CD4-positive, alpha-beta T cell (primary cell): ENCODE measurements at regions of chr9 and their contacts with region 1.

Region 1: GRCh38 chr9:98074115-98074990 is 17.8 kb downstream of the NANS start:
- DNase-seq: peak; percentile 48 to 82 (median 65)
- ATAC-seq: no peak
- H3K4me3 ChIP-seq: no peak overlapping the region
- H3K4me3 Mint-ChIP-seq: peak overlapping the region; percentile 69
- H3K27ac ChIP-seq: peak overlapping the region; percentile 73 to 83
- H3K27ac Mint-ChIP-seq: peak overlapping the region; percentile 94
- H3K4me1 ChIP-seq: peaks cover 28% of the 10 kb centered on the region
- H3K4me1 Mint-ChIP-seq: peaks cover 51% of the 10 kb centered on the region
- H3K27me3 ChIP-seq: no peaks in the 10 kb centered on the region
- H3K27me3 Mint-ChIP-seq: no peaks in the 10 kb centered on the region
- CTCF ChIP-seq: peak; percentile 99

Region 2: GRCh38 chr9:97954550-97954989 is 119.8 kb before region 1 on chr9:
- CTCF ChIA-PET with region 1: no interaction called
- POLR2A ChIA-PET with region 1: no interaction called
- intact Hi-C with region 1: no loop called
- DNase-seq: peak; percentile 38 to 84 (median 48)
- ATAC-seq: peak; percentile 93
- H3K4me3 ChIP-seq: no peak overlapping the region
- H3K4me3 Mint-ChIP-seq: no peak overlapping the region
- H3K27ac ChIP-seq: no peak overlapping the region
- H3K27ac Mint-ChIP-seq: no peak overlapping the region
- H3K4me1 ChIP-seq: peaks cover 7% of the 10 kb centered on the region
- H3K4me1 Mint-ChIP-seq: peaks cover 4% of the 10 kb centered on the region
- H3K27me3 ChIP-seq: no peaks in the 10 kb centered on the region
- H3K27me3 Mint-ChIP-seq: no peaks in the 10 kb centered on the region
- CTCF ChIP-seq: peak; percentile 81

Region 3: GRCh38 chr9:98101868-98102273 is 27.5 kb after region 1 on chr9:
- CTCF ChIA-PET with region 1: interaction called, 3 read pairs
- POLR2A ChIA-PET with region 1: interaction called, 13 read pairs
- intact Hi-C with region 1: loop called (anchors 1 to 2 kb)
- DNase-seq: peak; percentile 63 to 96 (median 80)
- ATAC-seq: peak; percentile 94
- H3K4me3 ChIP-seq: peak overlapping the region; percentile 34
- H3K4me3 Mint-ChIP-seq: peak overlapping the region; percentile 71
- H3K27ac ChIP-seq: peak overlapping the region; percentile 74 to 79
- H3K27ac Mint-ChIP-seq: peak overlapping the region; percentile 91
- H3K4me1 ChIP-seq: peaks cover 95% of the 10 kb centered on the region
- H3K4me1 Mint-ChIP-seq: peaks cover 84% of the 10 kb centered on the region
- H3K27me3 ChIP-seq: no peaks in the 10 kb centered on the region
- H3K27me3 Mint-ChIP-seq: no peaks in the 10 kb centered on the region
- CTCF ChIP-seq: no peak

Region 4: GRCh38 chr9:98142182-98142907 is 68.0 kb after region 1 on chr9:
- CTCF ChIA-PET with region 1: no interaction called
- POLR2A ChIA-PET with region 1: no interaction called
- intact Hi-C with region 1: no loop called
- DNase-seq: no peak
- ATAC-seq: no peak
- H3K4me3 ChIP-seq: no peak overlapping the region
- H3K4me3 Mint-ChIP-seq: no peak overlapping the region
- H3K27ac ChIP-seq: no peak overlapping the region
- H3K27ac Mint-ChIP-seq: no peak overlapping the region
- H3K4me1 ChIP-seq: peaks cover 7% of the 10 kb centered on the region
- H3K4me1 Mint-ChIP-seq: no peaks in the 10 kb centered on the region
- H3K27me3 ChIP-seq: no peaks in the 10 kb centered on the region
- H3K27me3 Mint-ChIP-seq: no peaks in the 10 kb centered on the region
- CTCF ChIP-seq: no peak

Region 5: DNA sequence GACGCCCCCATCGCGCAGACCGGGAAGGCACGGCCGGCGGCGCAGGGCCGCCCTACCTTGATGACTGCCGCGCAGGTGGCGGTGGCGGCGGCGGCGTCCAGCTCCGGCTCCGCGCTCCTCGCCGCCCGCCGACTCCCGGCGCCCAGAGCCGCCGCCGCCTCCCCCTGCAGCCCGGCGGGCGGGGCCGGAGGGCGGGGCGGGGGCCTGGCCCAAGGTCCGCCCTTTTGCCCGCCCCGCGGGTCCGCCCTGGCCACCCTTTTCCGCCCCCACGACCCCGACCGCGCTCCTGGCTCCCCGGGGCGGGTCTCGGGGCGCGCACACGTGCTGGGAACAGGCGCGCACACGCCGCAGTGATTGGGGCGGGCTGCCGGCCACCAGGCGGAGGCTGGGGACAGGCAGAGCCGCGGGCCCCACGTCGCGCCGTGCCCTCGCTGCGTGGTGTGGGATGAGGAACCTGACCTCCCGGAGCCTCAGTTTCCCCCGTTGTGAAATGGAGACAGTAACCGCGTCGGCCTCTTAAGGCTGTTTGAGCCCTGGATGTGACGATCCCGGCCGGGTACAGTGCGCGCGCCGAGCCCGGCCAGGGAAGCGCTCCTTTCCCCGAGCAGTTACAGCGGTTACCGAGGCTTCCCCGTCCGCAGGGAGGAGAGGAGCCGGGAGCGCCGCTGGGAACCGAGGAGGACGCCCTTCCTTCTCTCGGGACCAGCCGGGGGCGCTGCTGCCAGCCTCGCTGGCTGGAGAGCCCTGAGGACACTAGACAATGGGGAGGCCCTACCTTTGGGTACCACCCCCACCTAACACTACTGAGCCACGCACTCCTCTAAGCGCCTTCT is 118.4 kb after region 1 on chr9 and contains the start of gene CORO2A:
- CTCF ChIA-PET with region 1: interaction called, 3 read pairs
- POLR2A ChIA-PET with region 1: no interaction called
- intact Hi-C with region 1: loop called (anchors 5 kb)
- DNase-seq: peak; percentile 36 to 86 (median 66)
- ATAC-seq: peak; percentile 65
- H3K4me3 ChIP-seq: peak within 1 kb of the TSS; percentile 80
- H3K4me3 Mint-ChIP-seq: peak within 1 kb of the TSS; percentile 89
- H3K27ac ChIP-seq: peak within 1 kb of the TSS in 1 of 2 donors; percentile 30
- H3K27ac Mint-ChIP-seq: peak within 1 kb of the TSS; percentile 76
- H3K4me1 ChIP-seq: peaks cover 31% of the 10 kb centered on the region
- H3K4me1 Mint-ChIP-seq: peaks cover 44% of the 10 kb centered on the region
- H3K27me3 ChIP-seq: no peaks in the 10 kb centered on the region
- H3K27me3 Mint-ChIP-seq: no peaks in the 10 kb centered on the region
- CTCF ChIP-seq: peak; percentile 29
- total RNA-seq, gene CORO2A: 6.8 to 8.5 TPM

Region 6: DNA sequence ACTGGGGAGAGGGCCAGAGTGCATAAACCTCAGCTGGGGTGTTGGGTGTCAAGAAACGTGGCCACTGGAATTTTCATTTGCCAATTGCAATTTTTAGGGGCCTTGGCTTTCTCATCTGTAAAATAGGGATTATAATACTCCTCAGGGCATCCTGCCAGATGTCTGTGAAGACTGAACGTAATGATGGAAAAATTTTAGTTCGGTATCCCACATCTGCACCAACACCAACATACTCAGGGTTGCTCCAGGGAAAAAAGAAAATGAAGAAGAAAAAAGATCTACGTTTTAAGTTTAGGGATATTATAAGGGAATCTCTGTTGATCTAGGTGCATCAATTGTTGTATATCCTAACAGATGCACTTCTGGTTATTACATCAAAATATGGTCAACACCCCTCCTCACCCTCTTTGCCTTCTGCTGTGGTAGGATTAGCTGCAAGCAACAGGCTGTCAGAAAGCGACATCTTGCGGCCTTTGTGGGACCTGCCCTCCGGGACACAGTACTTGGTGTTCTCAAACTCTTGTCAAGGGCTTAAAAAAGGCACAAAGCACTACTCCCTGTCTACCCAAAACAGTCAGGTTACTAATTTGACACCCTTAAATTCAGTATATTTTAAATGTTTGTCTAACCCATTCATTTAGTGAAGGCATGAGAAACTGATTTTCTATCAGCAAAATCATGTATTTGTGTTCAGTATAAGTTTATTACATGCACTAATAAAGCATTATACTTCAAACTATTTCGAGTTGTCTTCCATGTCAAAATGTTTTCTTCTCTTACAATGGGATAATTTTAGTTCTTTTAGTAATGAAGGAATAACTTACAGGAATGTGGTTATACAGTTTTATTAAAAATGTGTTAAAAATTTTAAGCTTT is 189.4 kb after region 1 on chr9:
- CTCF ChIA-PET with region 1: interaction called, 10 read pairs
- POLR2A ChIA-PET with region 1: interaction called, 3 read pairs
- intact Hi-C with region 1: loop called (anchors 1 kb)
- DNase-seq: peak; percentile 73 to 90 (median 82)
- ATAC-seq: peak; percentile 100
- H3K4me3 ChIP-seq: no peak overlapping the region
- H3K4me3 Mint-ChIP-seq: no peak overlapping the region
- H3K27ac ChIP-seq: no peak overlapping the region
- H3K27ac Mint-ChIP-seq: no peak overlapping the region
- H3K4me1 ChIP-seq: no peaks in the 10 kb centered on the region
- H3K4me1 Mint-ChIP-seq: no peaks in the 10 kb centered on the region
- H3K27me3 ChIP-seq: no peaks in the 10 kb centered on the region
- H3K27me3 Mint-ChIP-seq: peaks cover 9% of the 10 kb centered on the region
- CTCF ChIP-seq: peak; percentile 97